ENCODE measurements at regions of chr5 and their contacts with region 1.

Region 1: GRCh38 chr5:56328753-56329560 is 95.8 kb upstream of the ANKRD55 start:
- DNase-seq: peak; percentile 76
- H3K4me3 Mint-ChIP-seq: peak overlapping the region; percentile 23
- H3K27ac Mint-ChIP-seq: peak overlapping the region; percentile 91
- H3K4me1 Mint-ChIP-seq: peaks cover 50% of the 10 kb centered on the region
- H3K27me3 Mint-ChIP-seq: no peaks in the 10 kb centered on the region

Region 2: DNA sequence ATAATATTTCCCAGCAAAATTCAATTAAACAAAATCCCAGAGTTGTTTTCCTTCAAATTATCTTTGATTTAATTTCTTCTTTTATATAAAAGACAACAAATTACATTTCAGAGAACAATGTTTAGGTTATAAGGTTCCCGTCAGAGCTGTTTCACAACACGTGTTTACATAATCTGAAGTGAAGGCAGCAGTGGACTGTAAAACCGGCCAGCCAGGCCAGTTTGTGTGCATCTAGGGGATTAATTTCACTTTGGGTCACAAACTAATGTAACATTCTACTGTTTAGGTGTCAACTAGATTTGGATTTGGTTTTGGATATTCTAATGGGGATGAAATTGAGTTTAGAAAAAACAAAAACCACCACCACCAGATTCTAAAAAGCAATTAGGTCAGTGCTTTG is 707.7 kb before region 1 on chr5:
- CTCF ChIA-PET with region 1: no interaction called
- intact Hi-C with region 1: no loop called
- DNase-seq: no peak
- H3K4me3 Mint-ChIP-seq: no peak overlapping the region
- H3K27ac Mint-ChIP-seq: no peak overlapping the region
- H3K4me1 Mint-ChIP-seq: peaks cover 4% of the 10 kb centered on the region
- H3K27me3 Mint-ChIP-seq: no peaks in the 10 kb centered on the region

Region 3: DNA sequence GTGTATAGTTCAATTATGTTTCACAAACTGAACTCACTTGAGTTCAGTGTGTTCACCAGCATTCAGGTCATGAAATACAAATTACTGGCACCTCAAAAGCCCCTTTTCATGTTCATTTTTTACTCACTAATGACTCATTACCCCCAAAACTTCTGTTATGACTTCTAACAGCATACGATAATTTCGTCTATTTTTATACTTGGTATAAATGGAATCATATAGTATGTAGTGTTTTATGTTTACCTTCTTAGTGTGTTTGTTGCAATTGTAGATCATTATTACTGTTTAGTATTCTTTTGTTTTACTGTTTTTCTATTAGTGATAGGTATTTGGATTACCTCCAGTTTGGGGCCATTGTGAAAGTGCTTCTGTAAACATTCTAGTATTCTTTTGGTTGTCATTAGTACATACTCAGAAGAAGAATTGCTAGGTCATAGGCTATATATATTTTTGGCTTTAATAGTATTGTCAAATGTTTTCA is 557.7 kb before region 1 on chr5:
- CTCF ChIA-PET with region 1: no interaction called
- intact Hi-C with region 1: loop called (anchors 1 kb)
- DNase-seq: no peak
- H3K4me3 Mint-ChIP-seq: no peak overlapping the region
- H3K27ac Mint-ChIP-seq: no peak overlapping the region
- H3K4me1 Mint-ChIP-seq: peaks cover 12% of the 10 kb centered on the region
- H3K27me3 Mint-ChIP-seq: no peaks in the 10 kb centered on the region

Region 4: GRCh38 chr5:55994574-55995333 is 334.2 kb before region 1 on chr5 and contains the start of gene IL6ST:
- CTCF ChIA-PET with region 1: no interaction called
- intact Hi-C with region 1: loop called (anchors 10 kb)
- DNase-seq: peak; percentile 97
- H3K4me3 Mint-ChIP-seq: peak within 1 kb of the TSS; percentile 100
- H3K27ac Mint-ChIP-seq: peak within 1 kb of the TSS; percentile 100
- H3K4me1 Mint-ChIP-seq: peaks cover 53% of the 10 kb centered on the region
- H3K27me3 Mint-ChIP-seq: no peaks in the 10 kb centered on the region
- total RNA-seq, gene IL6ST: 93.4 to 103 TPM

Region 5: GRCh38 chr5:56164376-56164775 is 164.6 kb before region 1 on chr5:
- CTCF ChIA-PET with region 1: no interaction called
- intact Hi-C with region 1: loop called (anchors 5 kb)
- DNase-seq: no peak
- H3K4me3 Mint-ChIP-seq: no peak overlapping the region
- H3K27ac Mint-ChIP-seq: no peak overlapping the region
- H3K4me1 Mint-ChIP-seq: peaks cover 78% of the 10 kb centered on the region
- H3K27me3 Mint-ChIP-seq: no peaks in the 10 kb centered on the region

Region 6: DNA sequence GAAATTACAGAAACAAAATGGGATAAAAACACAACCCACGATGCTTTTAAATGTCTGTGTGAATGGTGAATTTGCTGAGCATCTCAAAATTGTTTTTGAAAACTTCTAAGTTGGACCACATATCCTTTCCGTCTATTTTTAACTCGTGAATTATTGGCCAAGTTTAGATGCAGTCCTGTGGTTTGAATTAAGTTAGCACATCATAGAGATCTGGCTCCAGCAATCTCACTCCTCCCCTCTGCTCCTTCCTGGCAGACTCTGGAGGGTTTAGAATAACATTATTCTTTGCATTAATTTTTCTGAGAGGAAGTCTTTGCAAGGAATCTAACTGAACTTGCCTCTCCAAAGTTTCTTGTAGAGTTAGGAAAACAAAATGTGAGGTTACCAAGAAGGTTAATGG is 81.4 kb before region 1 on chr5:
- CTCF ChIA-PET with region 1: no interaction called
- intact Hi-C with region 1: no loop called
- DNase-seq: no peak
- H3K4me3 Mint-ChIP-seq: no peak overlapping the region
- H3K27ac Mint-ChIP-seq: no peak overlapping the region
- H3K4me1 Mint-ChIP-seq: peaks cover 2% of the 10 kb centered on the region
- H3K27me3 Mint-ChIP-seq: no peaks in the 10 kb centered on the region

Region 7: GRCh38 chr5:56490951-56491468 is 162.1 kb after region 1 on chr5:
- CTCF ChIA-PET with region 1: no interaction called
- intact Hi-C with region 1: loop called (anchors 1 kb)
- DNase-seq: peak; percentile 80
- H3K4me3 Mint-ChIP-seq: peak overlapping the region; percentile 45
- H3K27ac Mint-ChIP-seq: peak overlapping the region; percentile 65
- H3K4me1 Mint-ChIP-seq: peaks cover 25% of the 10 kb centered on the region
- H3K27me3 Mint-ChIP-seq: no peaks in the 10 kb centered on the region

Region 8: GRCh38 chr5:56827049-56827448 is 498.1 kb after region 1 on chr5:
- CTCF ChIA-PET with region 1: interaction called, 3 read pairs
- intact Hi-C with region 1: loop called (anchors 2 kb)
- DNase-seq: peak; percentile 30
- H3K4me3 Mint-ChIP-seq: peak overlapping the region; percentile 4
- H3K27ac Mint-ChIP-seq: peak overlapping the region; percentile 79
- H3K4me1 Mint-ChIP-seq: peaks cover 91% of the 10 kb centered on the region
- H3K27me3 Mint-ChIP-seq: no peaks in the 10 kb centered on the region

Region 9: GRCh38 chr5:57173185-57174127 is 844.5 kb after region 1 on chr5 and contains the start of gene GPBP1:
- CTCF ChIA-PET with region 1: no interaction called
- intact Hi-C with region 1: loop called (anchors 2 kb)
- DNase-seq: peak; percentile 99
- H3K4me3 Mint-ChIP-seq: peak within 1 kb of the TSS; percentile 94
- H3K27ac Mint-ChIP-seq: peak within 1 kb of the TSS; percentile 97
- H3K4me1 Mint-ChIP-seq: peaks cover 19% of the 10 kb centered on the region
- H3K27me3 Mint-ChIP-seq: no peaks in the 10 kb centered on the region
- total RNA-seq, gene GPBP1: 91.5 to 91.9 TPM